ENCODE measurements at regions of chr4 and their contacts with region 1.

Region 1: GRCh38 chr4:6772223-6772928 is 10.2 kb upstream of the KIAA0232 start:
- DNase-seq: no peak
- ATAC-seq: peak in 6 of 8 donors; percentile 10 to 72 (median 32)
- H3K4me3 ChIP-seq: no peak overlapping the region
- H3K27ac ChIP-seq: peak overlapping the region; percentile 58 to 91 (median 82)
- H3K4me1 ChIP-seq: peaks cover 2 to 61% (median 34%) of the 10 kb centered on the region in 9 donors
- H3K27me3 ChIP-seq: no peaks in the 10 kb centered on the region
- CTCF ChIP-seq: no peak

Region 2: DNA sequence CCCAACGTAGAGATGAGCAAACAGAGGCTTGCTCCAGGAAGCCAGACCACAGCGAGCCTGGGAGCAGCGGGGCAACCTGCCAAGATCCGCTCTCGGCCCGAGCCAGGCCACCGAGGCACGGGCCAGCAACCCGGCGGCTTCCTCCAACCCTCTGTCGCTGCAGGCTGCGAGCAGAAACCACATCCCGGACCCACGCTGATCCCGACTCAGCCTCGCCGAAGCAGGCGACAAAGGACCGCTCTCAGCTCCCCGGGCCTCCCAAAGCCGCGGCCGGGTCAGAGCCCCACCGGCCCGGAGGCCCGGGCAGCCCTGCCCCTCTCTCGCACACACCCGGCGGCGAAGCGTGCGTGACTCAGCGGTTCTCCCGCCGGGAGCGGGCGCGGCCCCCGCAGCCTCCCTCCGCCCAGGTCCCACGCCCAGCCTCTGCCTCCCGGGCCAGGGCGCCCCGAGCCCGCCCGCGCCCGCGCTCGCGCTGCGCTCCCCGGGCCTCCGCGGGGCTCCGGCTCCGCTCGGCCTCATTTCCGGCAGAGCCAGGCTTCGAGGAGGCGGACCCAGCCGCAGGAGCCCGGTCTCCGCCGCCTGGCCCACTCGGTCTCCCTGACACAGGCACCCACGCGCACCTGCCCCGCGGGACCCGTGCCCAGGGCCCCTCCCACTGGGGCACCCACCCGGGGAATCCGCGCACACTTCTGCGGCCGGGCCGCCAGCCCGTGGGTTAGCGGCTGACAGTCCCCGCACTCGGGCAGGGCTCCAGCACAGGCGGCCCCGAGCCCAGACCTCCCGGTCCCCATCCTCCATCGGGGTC is 301.7 kb before region 1 on chr4:
- intact Hi-C with region 1: no loop called
- DNase-seq: peak; percentile 25 to 68
- ATAC-seq: peak; percentile 38 to 80 (median 54)
- H3K4me3 ChIP-seq: peak overlapping the region; percentile 11 to 55 (median 47)
- H3K27ac ChIP-seq: peak overlapping the region in 3 of 10 donors; percentile 11 to 40 (median 28)
- H3K4me1 ChIP-seq: peaks cover 0 to 15% (median 8%) of the 10 kb centered on the region in 9 donors
- H3K27me3 ChIP-seq: peaks cover 4 to 87% (median 60%) of the 10 kb centered on the region in 7 donors
- CTCF ChIP-seq: no peak

Region 3: DNA sequence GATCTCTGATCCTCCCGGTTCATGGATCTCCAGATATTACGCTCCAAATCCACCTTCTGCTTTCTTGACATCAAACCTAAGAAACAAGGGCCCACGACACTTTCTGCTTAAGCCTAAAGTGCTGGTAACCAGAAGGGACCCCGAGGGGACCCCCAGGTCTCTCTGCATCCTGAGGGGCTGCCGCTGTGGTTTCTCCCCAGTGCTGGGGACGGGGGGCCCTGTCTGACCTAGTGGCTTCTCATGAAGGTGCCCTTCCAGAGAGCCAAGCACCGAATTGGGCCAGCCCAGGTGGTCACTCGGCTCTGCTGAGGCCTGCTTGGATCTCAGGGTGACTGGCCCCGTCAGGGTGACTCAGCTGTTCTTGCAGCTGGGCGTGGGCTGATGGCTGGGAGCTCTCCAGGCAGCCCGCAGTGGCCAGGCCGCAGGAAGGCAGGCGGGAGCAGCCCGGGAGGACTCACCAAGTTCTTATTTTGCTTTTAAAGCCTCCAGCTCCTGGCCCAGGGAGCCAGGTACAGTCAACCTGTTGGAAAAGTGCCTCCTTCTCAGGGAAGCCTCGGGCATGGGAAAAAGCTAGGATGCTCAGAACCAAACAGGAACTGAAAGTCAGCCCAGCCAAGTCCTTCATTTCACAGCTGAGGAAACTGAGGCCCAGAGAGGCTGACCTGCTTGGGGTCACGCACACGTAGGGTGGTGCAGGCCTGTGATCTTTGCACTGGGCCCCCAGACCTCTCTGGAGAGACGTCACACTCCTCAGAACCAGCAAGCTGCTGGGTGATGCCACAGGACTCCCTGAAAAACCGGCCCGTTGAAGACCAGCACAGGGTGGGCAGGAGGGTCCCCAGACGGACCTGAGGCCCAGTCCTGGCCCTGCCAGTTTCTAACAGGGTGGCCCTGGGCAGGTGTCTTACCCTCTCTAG is 39.7 kb before region 1 on chr4:
- intact Hi-C with region 1: loop called in 1 of 10 experiments (anchors 5 kb)
- DNase-seq: peak; percentile 62 to 76
- ATAC-seq: peak; percentile 85 to 95 (median 92)
- H3K4me3 ChIP-seq: no peak overlapping the region
- H3K27ac ChIP-seq: peak overlapping the region in 7 of 10 donors; percentile 49 to 69 (median 60)
- H3K4me1 ChIP-seq: peaks cover 0 to 11% (median 4%) of the 10 kb centered on the region in 9 donors
- H3K27me3 ChIP-seq: no peaks in the 10 kb centered on the region
- CTCF ChIP-seq: no peak

Region 4: DNA sequence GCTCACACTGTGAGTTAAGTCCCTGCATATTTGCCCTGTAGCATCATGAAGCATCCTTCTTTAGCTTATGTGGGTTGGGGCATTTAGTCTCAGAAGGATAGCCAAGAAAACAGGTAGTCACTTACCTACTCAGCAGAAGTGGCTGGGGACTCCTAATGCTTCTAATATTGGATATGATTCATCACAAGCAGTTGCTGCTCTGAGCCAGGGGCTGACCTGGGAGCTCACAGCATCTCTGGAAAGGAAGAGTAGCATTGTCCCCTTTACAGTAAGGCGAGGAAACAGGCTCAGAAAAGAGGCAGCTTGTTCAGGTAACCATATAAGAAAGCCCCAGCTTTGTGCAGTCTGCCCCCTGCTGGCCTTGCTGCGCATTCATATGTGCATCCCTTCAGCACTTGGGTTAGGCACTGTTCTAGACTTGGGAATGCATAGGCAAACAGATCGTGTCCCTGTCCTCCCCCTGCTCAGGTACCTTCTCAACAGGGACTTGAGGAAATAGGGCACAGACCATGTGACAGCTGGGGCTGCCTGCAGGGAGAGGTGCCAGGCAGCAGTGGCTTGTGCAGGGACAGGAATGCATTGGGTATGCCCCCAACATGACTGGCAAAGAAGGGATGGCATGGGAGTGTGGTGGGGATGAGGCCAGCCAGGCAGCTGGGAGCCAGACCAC is 101.6 kb after region 1 on chr4:
- intact Hi-C with region 1: loop called in 1 of 10 experiments (anchors 5 kb)
- DNase-seq: peak; percentile 60 to 74
- ATAC-seq: peak; percentile 40 to 83 (median 72)
- H3K4me3 ChIP-seq: no peak overlapping the region
- H3K27ac ChIP-seq: peak overlapping the region in 1 of 10 donors; percentile 2
- H3K4me1 ChIP-seq: peaks cover 3 to 57% (median 32%) of the 10 kb centered on the region in 9 donors
- H3K27me3 ChIP-seq: no peaks in the 10 kb centered on the region
- CTCF ChIP-seq: peak; percentile 56 to 90 (median 87)

Region 5: DNA sequence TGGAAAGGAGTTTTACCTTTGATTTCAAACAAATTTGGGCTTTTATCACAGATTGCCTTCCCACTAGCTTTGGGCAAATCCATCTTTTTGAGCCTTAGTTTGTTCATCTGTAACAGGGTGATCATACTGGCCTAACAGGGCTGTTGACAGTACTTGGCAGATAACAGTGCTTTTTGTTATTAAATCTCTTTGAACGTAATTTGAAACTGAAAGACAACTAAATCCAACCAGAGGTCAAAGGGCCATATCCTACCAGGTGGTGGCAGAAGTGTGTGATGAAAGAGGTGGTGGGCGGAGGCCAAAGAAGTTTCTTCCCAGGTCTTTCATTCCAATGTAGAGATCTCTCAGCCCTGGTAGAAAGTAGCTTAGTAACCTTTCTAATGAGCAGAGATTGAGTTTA is 235.6 kb after region 1 on chr4:
- intact Hi-C with region 1: no loop called
- DNase-seq: no peak
- ATAC-seq: no peak
- H3K4me3 ChIP-seq: no peak overlapping the region
- H3K27ac ChIP-seq: no peak overlapping the region
- H3K4me1 ChIP-seq: peaks cover 0 to 13% (median 0%) of the 10 kb centered on the region in 9 donors
- H3K27me3 ChIP-seq: no peaks in the 10 kb centered on the region
- CTCF ChIP-seq: no peak